HCT116 (cell line): ENCODE measurements at regions of chr18 and their contacts with region 1.

Region 1: GRCh38 chr18:27599202-27599829 is 414.2 kb upstream of the CHST9 start:
- DNase-seq: peak; percentile 24
- ATAC-seq: peak; percentile 66
- H3K4me3 ChIP-seq: no peak overlapping the region
- H3K27ac ChIP-seq: no peak overlapping the region
- H3K4me1 ChIP-seq: no peaks in the 10 kb centered on the region
- H3K27me3 ChIP-seq: no peaks in the 10 kb centered on the region
- CTCF ChIP-seq: peak; percentile 35 to 88 (median 86); a peak in 5 of 6 replicates
- POLR2A ChIP-seq: no peak
- RAD21 ChIP-seq: peak; percentile 51

Region 2: GRCh38 chr18:26307189-26307773 is 1292.0 kb before region 1 on chr18:
- CTCF ChIA-PET with region 1: no interaction called
- POLR2A ChIA-PET with region 1: no interaction called
- RAD21 ChIA-PET with region 1: no interaction called
- intact Hi-C with region 1: loop called (anchors 10 kb)
- DNase-seq: peak; percentile 15
- ATAC-seq: peak; percentile 71
- H3K4me3 ChIP-seq: no peak overlapping the region
- H3K27ac ChIP-seq: no peak overlapping the region
- H3K4me1 ChIP-seq: no peaks in the 10 kb centered on the region
- H3K27me3 ChIP-seq: no peaks in the 10 kb centered on the region
- CTCF ChIP-seq: peak; percentile 48 to 67 (median 62); a peak in 5 of 6 replicates
- POLR2A ChIP-seq: no peak
- RAD21 ChIP-seq: peak; percentile 71

Region 3: DNA sequence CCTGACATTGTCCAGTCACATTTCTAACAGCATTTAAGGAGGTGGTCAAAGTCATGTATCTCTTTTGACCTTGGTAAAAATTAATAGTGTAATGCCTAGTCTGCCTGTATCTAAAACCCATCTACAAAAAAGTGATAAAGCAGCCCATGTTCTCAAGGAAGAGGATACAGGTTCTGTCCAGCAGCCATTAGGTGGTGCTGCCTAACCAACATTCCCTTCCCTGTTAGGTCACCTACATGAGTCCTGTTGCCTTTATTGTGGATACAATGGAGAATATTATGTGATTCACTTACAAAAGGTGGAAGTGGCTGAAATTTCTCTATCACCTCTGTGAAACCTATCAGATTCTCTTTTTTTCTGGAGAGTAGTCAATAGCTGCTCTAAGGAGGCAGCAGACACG is 786.3 kb before region 1 on chr18:
- CTCF ChIA-PET with region 1: no interaction called
- POLR2A ChIA-PET with region 1: no interaction called
- RAD21 ChIA-PET with region 1: no interaction called
- intact Hi-C with region 1: loop called (anchors 5 kb)
- DNase-seq: peak; percentile 44
- ATAC-seq: peak; percentile 86
- H3K4me3 ChIP-seq: no peak overlapping the region
- H3K27ac ChIP-seq: no peak overlapping the region
- H3K4me1 ChIP-seq: no peaks in the 10 kb centered on the region
- H3K27me3 ChIP-seq: no peaks in the 10 kb centered on the region
- CTCF ChIP-seq: peak; percentile 44 to 67 (median 49); a peak in 4 of 6 replicates
- POLR2A ChIP-seq: no peak
- RAD21 ChIP-seq: peak; percentile 70

Region 4: GRCh38 chr18:27017901-27018500 is 581.3 kb before region 1 on chr18:
- CTCF ChIA-PET with region 1: interaction called, 10 read pairs
- POLR2A ChIA-PET with region 1: no interaction called
- RAD21 ChIA-PET with region 1: no interaction called
- intact Hi-C with region 1: loop called (anchors 1 kb)
- DNase-seq: no peak
- ATAC-seq: no peak
- H3K4me3 ChIP-seq: no peak overlapping the region
- H3K27ac ChIP-seq: no peak overlapping the region
- H3K4me1 ChIP-seq: no peaks in the 10 kb centered on the region
- H3K27me3 ChIP-seq: peaks cover 5% of the 10 kb centered on the region; the same call in 1 of the 2 replicates
- CTCF ChIP-seq: peak; percentile 17 to 59 (median 51); a peak in 4 of 6 replicates
- POLR2A ChIP-seq: no peak
- RAD21 ChIP-seq: peak; percentile 60

Region 5: DNA sequence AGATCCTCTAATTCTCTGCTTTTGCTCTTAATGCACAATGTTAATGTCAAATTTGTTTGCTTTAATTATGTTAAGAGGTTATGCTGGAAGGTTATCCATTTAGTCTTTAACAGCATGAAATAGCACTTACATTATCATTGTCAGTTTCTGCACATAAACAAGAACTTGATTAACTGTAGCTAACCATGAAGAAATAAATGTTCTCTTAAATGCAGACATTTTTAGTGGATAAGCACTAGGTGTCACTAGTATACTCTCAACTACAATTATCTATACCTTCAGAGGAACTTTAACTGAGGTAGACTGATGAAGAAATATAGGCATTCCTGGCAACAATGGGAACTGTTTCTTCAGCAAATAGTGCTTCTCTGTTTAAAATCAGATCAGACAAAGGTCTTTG is 235.4 kb before region 1 on chr18:
- CTCF ChIA-PET with region 1: interaction called, 5 read pairs
- POLR2A ChIA-PET with region 1: no interaction called
- RAD21 ChIA-PET with region 1: no interaction called
- intact Hi-C with region 1: loop called (anchors 10 kb)
- DNase-seq: no peak
- ATAC-seq: no peak
- H3K4me3 ChIP-seq: no peak overlapping the region
- H3K27ac ChIP-seq: no peak overlapping the region
- H3K4me1 ChIP-seq: no peaks in the 10 kb centered on the region
- H3K27me3 ChIP-seq: no peaks in the 10 kb centered on the region
- CTCF ChIP-seq: peak in 1 of 3 experiments; percentile 19; a peak in 1 of 6 replicates
- POLR2A ChIP-seq: no peak
- RAD21 ChIP-seq: no peak

Region 6: DNA sequence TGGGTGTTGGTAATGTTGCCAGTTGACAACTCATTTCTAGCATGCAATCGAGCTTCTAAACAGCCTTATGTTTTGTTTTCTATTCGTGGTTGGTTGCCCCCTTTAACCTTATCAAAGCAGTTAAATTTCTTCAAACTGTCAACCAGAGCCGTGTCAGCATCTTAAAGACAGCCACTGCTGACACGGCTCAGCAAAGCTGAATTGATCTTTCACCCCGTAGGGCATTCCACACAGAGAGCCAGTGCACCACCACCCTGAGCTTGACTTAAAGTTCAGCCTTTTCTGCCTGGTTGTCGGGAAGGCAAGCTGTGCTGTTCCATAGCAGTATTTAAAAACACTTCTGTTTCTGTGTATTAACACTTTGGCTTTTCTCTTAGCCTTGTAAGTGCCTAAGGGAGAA is 59.2 kb before region 1 on chr18:
- CTCF ChIA-PET with region 1: no interaction called
- POLR2A ChIA-PET with region 1: no interaction called
- RAD21 ChIA-PET with region 1: no interaction called
- intact Hi-C with region 1: no loop called
- DNase-seq: no peak
- ATAC-seq: no peak
- H3K4me3 ChIP-seq: no peak overlapping the region
- H3K27ac ChIP-seq: no peak overlapping the region
- H3K4me1 ChIP-seq: no peaks in the 10 kb centered on the region
- H3K27me3 ChIP-seq: no peaks in the 10 kb centered on the region
- CTCF ChIP-seq: no peak
- POLR2A ChIP-seq: no peak
- RAD21 ChIP-seq: no peak

Region 7: DNA sequence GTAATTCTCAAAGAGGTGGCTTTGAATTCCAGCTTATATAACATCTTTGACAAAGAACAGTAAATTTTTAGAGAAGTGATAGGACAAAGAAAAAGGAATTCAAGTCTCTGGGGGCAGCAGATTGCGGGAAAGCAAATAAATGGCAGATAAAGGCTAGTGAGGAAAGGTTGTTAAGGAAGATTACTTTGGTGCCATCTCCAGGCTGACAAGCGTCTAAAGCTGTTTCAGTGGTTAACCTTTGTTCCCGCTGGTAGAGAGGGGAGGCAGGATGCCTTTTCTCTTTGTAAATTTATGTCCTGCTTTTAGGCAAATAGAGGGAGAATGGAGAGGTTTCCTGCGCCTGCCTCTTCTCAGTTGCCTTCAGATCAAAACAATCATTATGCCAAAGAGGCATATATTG is 17.0 kb after region 1 on chr18:
- CTCF ChIA-PET with region 1: no interaction called
- POLR2A ChIA-PET with region 1: no interaction called
- RAD21 ChIA-PET with region 1: no interaction called
- intact Hi-C with region 1: no loop called
- DNase-seq: no peak
- ATAC-seq: no peak
- H3K4me3 ChIP-seq: no peak overlapping the region
- H3K27ac ChIP-seq: no peak overlapping the region
- H3K4me1 ChIP-seq: no peaks in the 10 kb centered on the region
- H3K27me3 ChIP-seq: no peaks in the 10 kb centered on the region
- CTCF ChIP-seq: no peak
- POLR2A ChIP-seq: no peak
- RAD21 ChIP-seq: no peak